Activated CD4-positive, alpha-beta memory T cell treated with anti-CD3 and anti-CD28 coated beads, Interleukin-2, amount 10 ng/mL, durations not matched to agents 7 days and 5 days (primary cell): ENCODE measurements at regions of chr12 and their contacts with region 1.

Region 1: GRCh38 chr12:50043854-50044253 is 13.5 kb upstream of the ASIC1 start:
- DNase-seq: no peak
- H3K4me3 Mint-ChIP-seq: no peak overlapping the region
- H3K27ac Mint-ChIP-seq: no peak overlapping the region
- H3K4me1 Mint-ChIP-seq: peaks cover 15% of the 10 kb centered on the region
- H3K27me3 Mint-ChIP-seq: peaks cover 9% of the 10 kb centered on the region

Region 2: DNA sequence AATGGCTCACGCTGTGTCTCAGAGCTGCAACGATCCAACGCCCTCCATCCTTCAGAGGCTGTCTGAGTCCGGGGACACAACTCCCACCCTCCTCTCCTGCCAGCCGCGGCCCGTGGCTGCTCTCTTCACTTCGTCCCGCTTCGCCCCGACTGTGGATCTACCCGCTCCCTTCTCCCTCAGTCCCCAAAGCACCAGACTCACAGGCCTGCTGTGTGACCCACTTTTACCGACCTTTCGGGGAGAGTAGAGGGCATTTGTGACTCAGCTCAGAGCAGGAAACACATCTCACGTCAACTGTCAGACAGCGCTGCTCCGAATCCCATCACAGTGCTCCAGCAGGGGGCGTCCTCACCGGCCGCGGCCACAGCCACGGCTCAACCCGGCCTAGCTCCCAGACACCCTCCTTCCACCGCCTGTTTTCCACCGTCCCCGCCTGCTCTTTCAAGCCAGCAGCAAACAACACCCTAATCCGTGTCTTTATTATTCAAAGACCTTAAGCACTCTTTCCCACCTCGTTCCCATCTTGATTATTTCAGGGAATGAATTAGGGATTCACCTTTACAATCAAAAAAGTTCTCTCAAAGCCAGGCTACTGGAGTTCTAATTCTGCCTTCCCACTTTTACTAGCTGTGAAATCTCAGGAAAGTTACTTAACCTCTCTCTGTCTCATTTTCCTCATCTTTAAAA is 98.3 kb before region 1 on chr12:
- CTCF ChIA-PET with region 1: no interaction called
- POLR2A ChIA-PET with region 1: no interaction called
- DNase-seq: peak; percentile 89
- H3K4me3 Mint-ChIP-seq: peak overlapping the region; percentile 82
- H3K27ac Mint-ChIP-seq: peak overlapping the region; percentile 90
- H3K4me1 Mint-ChIP-seq: peaks cover 55% of the 10 kb centered on the region
- H3K27me3 Mint-ChIP-seq: peaks cover 4% of the 10 kb centered on the region

Region 3: GRCh38 chr12:50066433-50066832 is 22.6 kb after region 1 on chr12:
- CTCF ChIA-PET with region 1: interaction called, 46 read pairs
- POLR2A ChIA-PET with region 1: interaction called, 3 read pairs
- DNase-seq: no peak
- H3K4me3 Mint-ChIP-seq: no peak overlapping the region
- H3K27ac Mint-ChIP-seq: no peak overlapping the region
- H3K4me1 Mint-ChIP-seq: peaks cover 6% of the 10 kb centered on the region
- H3K27me3 Mint-ChIP-seq: peaks cover 11% of the 10 kb centered on the region